ENCODE measurements at regions of chr6 and their contacts with region 1.

Region 1: GRCh38 chr6:34196126-34196830 is 40.4 kb upstream of the HMGA1 start:
- DNase-seq: peak; percentile 94
- ATAC-seq: peak; percentile 99
- H3K4me3 Mint-ChIP-seq: peak overlapping the region; percentile 91
- H3K27ac Mint-ChIP-seq: peak overlapping the region; percentile 83
- H3K4me1 Mint-ChIP-seq: peaks cover 8% of the 10 kb centered on the region
- H3K27me3 Mint-ChIP-seq: no peaks in the 10 kb centered on the region
- CTCF ChIP-seq: peak; percentile 78

Region 2: DNA sequence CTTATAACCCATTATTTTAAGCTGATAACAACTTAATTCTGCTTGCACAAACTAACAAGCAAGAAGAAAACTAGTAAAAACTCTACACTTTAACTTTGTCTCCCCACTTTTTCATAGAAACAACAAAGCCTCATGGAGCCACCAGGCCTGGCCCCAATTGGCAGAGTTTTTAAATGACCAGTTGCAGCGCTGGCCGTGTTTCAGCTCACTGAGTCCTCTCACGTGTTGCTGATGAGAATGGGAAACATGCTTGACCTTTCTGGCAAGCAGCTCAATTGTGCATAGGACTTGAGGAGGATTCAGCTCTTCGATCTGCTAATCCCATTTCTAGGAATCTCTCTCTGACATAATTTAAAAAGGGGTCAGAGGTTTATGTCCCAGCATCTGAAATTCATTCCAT is 25.9 kb before region 1 on chr6:
- CTCF ChIA-PET with region 1: interaction called, 13 read pairs
- POLR2A ChIA-PET with region 1: interaction called, 5 read pairs
- intact Hi-C with region 1: no loop called
- DNase-seq: no peak
- ATAC-seq: no peak
- H3K4me3 Mint-ChIP-seq: no peak overlapping the region
- H3K27ac Mint-ChIP-seq: no peak overlapping the region
- H3K4me1 Mint-ChIP-seq: no peaks in the 10 kb centered on the region
- H3K27me3 Mint-ChIP-seq: peaks cover 2% of the 10 kb centered on the region
- CTCF ChIP-seq: no peak

Region 3: DNA sequence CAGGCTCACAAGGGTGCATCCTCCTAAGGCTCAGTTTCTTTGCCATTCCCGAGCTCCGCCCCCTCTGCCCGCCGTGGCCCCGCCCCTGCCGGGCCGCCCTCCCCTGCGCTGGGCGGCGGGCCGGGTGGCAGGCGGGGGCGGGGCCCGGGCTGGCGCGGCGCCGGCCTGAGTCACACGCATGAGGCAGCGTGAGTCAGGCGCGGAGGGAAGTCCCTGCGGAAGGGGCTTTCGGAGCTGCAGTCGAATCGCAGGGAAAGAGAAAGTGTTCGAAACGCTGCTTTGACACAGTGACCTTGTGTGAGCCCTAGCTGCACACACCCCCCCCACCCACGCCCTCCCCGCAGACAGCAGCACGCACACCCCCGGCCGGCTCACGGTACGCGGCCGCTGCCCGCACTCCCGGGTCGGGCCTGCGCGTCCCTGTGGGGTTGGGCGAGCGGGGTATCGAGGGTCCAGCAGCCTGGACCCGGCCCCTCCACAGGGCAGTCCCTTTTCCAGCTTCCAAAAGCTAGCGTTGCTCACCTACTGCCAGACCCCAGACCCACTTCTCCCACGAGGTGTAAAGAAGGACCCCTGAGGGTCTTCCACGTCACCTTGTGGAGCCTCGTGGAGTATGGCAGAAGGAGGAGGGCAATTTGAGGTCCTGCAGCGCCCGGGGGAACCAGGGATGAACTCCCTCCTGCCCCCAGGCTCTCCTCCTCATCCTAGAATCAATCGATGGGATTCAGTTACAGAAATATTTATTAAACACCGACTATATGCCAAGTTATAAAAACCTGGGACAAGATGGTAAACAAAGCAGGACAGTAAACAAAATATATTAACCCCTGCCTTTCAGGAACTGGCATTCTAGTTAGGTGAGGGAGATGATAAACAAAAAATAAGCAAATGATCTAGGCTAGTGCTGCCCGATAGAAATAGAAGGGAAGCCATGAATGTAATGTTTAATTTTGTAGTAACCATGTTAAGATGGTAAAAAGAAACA is 28.0 kb after region 1 on chr6:
- CTCF ChIA-PET with region 1: interaction called, 10 read pairs
- POLR2A ChIA-PET with region 1: interaction called, 15 read pairs
- intact Hi-C with region 1: loop called (anchors 1 kb)
- DNase-seq: peak; percentile 94
- ATAC-seq: peak; percentile 94
- H3K4me3 Mint-ChIP-seq: peak overlapping the region; percentile 68
- H3K27ac Mint-ChIP-seq: peak overlapping the region; percentile 87
- H3K4me1 Mint-ChIP-seq: peaks cover 64% of the 10 kb centered on the region
- H3K27me3 Mint-ChIP-seq: no peaks in the 10 kb centered on the region
- CTCF ChIP-seq: no peak

Region 4: GRCh38 chr6:34414999-34415858 is 219.0 kb after region 1 on chr6:
- CTCF ChIA-PET with region 1: interaction called, 77 read pairs
- POLR2A ChIA-PET with region 1: interaction called, 29 read pairs
- intact Hi-C with region 1: loop called (anchors 1 kb)
- DNase-seq: no peak
- ATAC-seq: peak; percentile 83
- H3K4me3 Mint-ChIP-seq: no peak overlapping the region
- H3K27ac Mint-ChIP-seq: no peak overlapping the region
- H3K4me1 Mint-ChIP-seq: peaks cover 6% of the 10 kb centered on the region
- H3K27me3 Mint-ChIP-seq: no peaks in the 10 kb centered on the region
- CTCF ChIP-seq: no peak

Measured in activated B cell treated with CpG ODN at 0.5 μM for 24 hours (primary cell).